PC-9 (cell line): ENCODE measurements at regions of chr6 and their contacts with region 1.

Region 1: GRCh38 chr6:149985481-149985937 is 21.8 kb downstream of the ULBP1 start:
- DNase-seq: no peak
- H3K4me3 ChIP-seq: no peak overlapping the region
- H3K27ac ChIP-seq: no peak overlapping the region
- H3K4me1 ChIP-seq: peaks cover 5% of the 10 kb centered on the region; the same call in 1 of the 2 replicates
- H3K27me3 ChIP-seq: peaks cover 38% of the 10 kb centered on the region
- CTCF ChIP-seq: no peak

Region 2: GRCh38 chr6:149884215-149884614 is 101.3 kb before region 1 on chr6:
- CTCF ChIA-PET with region 1: no interaction called
- POLR2A ChIA-PET with region 1: no interaction called
- intact Hi-C with region 1: no loop called
- DNase-seq: no peak
- H3K4me3 ChIP-seq: no peak overlapping the region
- H3K27ac ChIP-seq: no peak overlapping the region
- H3K4me1 ChIP-seq: peaks cover 25% of the 10 kb centered on the region
- H3K27me3 ChIP-seq: no peaks in the 10 kb centered on the region
- CTCF ChIP-seq: no peak

Region 3: GRCh38 chr6:150751296-150751695 is 765.8 kb after region 1 on chr6:
- CTCF ChIA-PET with region 1: no interaction called
- POLR2A ChIA-PET with region 1: interaction called, 34 read pairs
- intact Hi-C with region 1: no loop called
- DNase-seq: peak in 1 of 2 experiments; percentile 62
- H3K4me3 ChIP-seq: no peak overlapping the region
- H3K27ac ChIP-seq: no peak overlapping the region
- H3K4me1 ChIP-seq: peaks cover 25% of the 10 kb centered on the region
- H3K27me3 ChIP-seq: no peaks in the 10 kb centered on the region
- CTCF ChIP-seq: no peak